HCT116 (cell line): ENCODE measurements at regions of chr1 and their contacts with region 1.

Region 1: GRCh38 chr1:188642704-188643103 is 1814.0 kb downstream of the PLA2G4A start:
- DNase-seq: no peak
- ATAC-seq: no peak
- H3K4me3 ChIP-seq: no peak overlapping the region
- H3K27ac ChIP-seq: no peak overlapping the region
- H3K4me1 ChIP-seq: no peaks in the 10 kb centered on the region
- H3K27me3 ChIP-seq: no peaks in the 10 kb centered on the region
- CTCF ChIP-seq: no peak
- POLR2A ChIP-seq: no peak
- RAD21 ChIP-seq: no peak

Region 2: GRCh38 chr1:188615321-188615720 is 27.4 kb before region 1 on chr1:
- CTCF ChIA-PET with region 1: no interaction called
- POLR2A ChIA-PET with region 1: no interaction called
- RAD21 ChIA-PET with region 1: no interaction called
- intact Hi-C with region 1: loop called (anchors 1 kb)
- DNase-seq: no peak
- ATAC-seq: no peak
- H3K4me3 ChIP-seq: no peak overlapping the region
- H3K27ac ChIP-seq: no peak overlapping the region
- H3K4me1 ChIP-seq: no peaks in the 10 kb centered on the region
- H3K27me3 ChIP-seq: no peaks in the 10 kb centered on the region
- CTCF ChIP-seq: no peak
- POLR2A ChIP-seq: no peak
- RAD21 ChIP-seq: no peak

Region 3: DNA sequence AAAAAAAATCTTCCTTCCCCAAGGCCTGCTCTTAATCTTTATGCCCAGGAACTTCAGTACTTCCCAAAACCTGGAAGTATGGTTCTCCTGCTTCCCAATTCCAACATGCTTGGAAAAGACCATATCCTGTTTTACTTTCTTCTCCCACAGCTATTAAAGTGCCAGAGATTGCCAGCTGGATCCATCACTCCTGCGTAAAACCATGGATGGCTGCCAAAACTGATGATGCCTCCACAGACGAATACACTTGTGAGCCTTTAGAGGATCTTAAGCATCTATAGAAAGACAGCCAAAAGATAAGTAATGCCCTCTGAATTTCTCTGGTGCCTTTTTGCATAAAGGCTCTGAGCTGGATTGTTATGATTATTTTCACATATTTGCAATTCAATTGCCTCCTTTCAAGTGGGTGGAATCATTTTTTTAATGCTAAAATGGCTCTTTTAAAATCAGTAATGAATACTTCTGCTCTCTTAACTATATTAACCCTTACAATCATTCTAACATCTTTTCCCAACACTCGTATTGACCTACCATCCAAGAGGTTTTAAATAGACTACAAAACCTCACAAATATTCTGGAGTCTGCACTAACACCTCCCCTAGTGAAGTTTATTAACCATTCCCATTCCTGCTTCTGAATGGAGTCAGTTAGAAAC is 27.2 kb after region 1 on chr1:
- CTCF ChIA-PET with region 1: no interaction called
- POLR2A ChIA-PET with region 1: no interaction called
- RAD21 ChIA-PET with region 1: no interaction called
- intact Hi-C with region 1: no loop called
- DNase-seq: no peak
- ATAC-seq: no peak
- H3K4me3 ChIP-seq: no peak overlapping the region
- H3K27ac ChIP-seq: no peak overlapping the region
- H3K4me1 ChIP-seq: peaks cover 0 to 13% of the 10 kb centered on the region in 2 experiments; a peak in 2 of 4 replicates
- H3K27me3 ChIP-seq: no peaks in the 10 kb centered on the region
- CTCF ChIP-seq: no peak
- POLR2A ChIP-seq: no peak
- RAD21 ChIP-seq: no peak

Region 4: GRCh38 chr1:188986731-188987417 is 344.2 kb after region 1 on chr1:
- CTCF ChIA-PET with region 1: no interaction called
- POLR2A ChIA-PET with region 1: no interaction called
- RAD21 ChIA-PET with region 1: no interaction called
- intact Hi-C with region 1: no loop called
- DNase-seq: no peak
- ATAC-seq: no peak
- H3K4me3 ChIP-seq: no peak overlapping the region
- H3K27ac ChIP-seq: no peak overlapping the region
- H3K4me1 ChIP-seq: no peaks in the 10 kb centered on the region
- H3K27me3 ChIP-seq: no peaks in the 10 kb centered on the region
- CTCF ChIP-seq: no peak
- POLR2A ChIP-seq: no peak
- RAD21 ChIP-seq: no peak